ENCODE measurements at regions of chr4 and their contacts with region 1.

Region 1: GRCh38 chr4:56496241-56496640 is 9.3 kb upstream of the ARL9 start:
- DNase-seq: no peak
- H3K4me3 ChIP-seq: no peak overlapping the region
- H3K27ac ChIP-seq: no peak overlapping the region
- H3K4me1 ChIP-seq: no peaks in the 10 kb centered on the region
- H3K27me3 ChIP-seq: no peaks in the 10 kb centered on the region
- CTCF ChIP-seq: no peak
- POLR2A ChIP-seq: no peak

Region 2: DNA sequence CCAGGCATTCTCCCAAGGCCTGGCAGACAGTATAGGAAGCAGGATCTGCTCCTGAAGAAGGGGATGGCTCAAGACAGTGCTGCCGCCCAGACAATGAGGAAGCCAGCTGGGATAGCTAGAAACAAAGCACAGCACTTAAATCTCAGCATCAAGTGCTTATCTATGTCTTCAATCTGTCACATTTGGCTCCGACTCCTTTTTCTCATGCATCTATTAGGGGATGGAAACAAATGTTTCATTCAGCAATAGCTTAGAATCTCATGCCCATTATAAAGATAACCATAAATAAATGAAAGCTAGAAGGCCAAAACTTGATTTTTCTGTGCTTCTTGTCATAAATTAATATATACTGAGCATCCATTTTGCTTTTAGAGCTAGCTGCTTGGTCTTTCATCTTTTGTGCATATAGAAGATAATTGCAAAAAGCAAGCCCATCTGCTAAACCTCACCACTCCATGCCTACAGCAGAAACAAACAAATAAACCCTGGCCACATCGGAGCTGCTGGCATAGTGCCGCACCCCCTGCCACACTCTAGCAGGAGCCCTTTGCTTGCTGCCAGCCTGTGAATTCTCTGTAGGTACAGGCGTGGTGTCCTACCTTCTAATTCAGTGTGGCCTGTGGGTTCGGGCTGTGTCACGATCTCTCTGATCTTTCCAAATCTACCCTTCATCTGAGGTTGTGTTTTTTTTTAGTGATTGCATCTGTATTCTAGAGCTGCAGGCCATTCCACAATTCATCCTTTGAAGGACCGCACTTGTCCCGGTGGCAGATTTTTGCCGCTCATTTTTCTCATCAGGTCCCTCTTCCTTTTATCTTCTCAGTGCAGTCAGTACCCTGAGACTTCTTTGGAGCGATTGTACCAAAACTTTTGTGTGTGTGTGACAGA is 184.7 kb before region 1 on chr4:
- intact Hi-C with region 1: no loop called
- DNase-seq: no peak
- H3K4me3 ChIP-seq: no peak overlapping the region
- H3K27ac ChIP-seq: no peak overlapping the region
- H3K4me1 ChIP-seq: no peaks in the 10 kb centered on the region
- H3K27me3 ChIP-seq: no peaks in the 10 kb centered on the region
- CTCF ChIP-seq: no peak
- POLR2A ChIP-seq: no peak

Region 3: DNA sequence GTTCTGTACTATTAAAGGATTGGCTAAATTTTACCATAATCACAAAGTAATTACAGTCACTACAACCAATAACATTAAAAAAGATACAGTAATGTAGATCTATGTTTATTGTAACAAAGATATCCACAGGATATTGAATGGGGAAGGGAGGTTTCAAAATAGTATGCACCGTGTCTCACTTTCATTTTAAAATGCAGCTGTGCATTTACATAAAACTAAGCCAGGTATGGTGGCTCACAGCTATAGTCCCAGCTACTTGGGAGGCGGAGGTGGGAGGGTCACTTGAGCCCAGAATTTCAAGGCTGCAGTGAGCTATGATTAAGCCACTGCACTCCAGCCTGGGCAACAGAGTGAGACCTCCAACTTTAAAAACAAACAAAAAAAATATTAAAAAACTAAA is 20.3 kb before region 1 on chr4:
- intact Hi-C with region 1: loop called (anchors 2 kb)
- DNase-seq: no peak
- H3K4me3 ChIP-seq: no peak overlapping the region
- H3K27ac ChIP-seq: no peak overlapping the region
- H3K4me1 ChIP-seq: no peaks in the 10 kb centered on the region
- H3K27me3 ChIP-seq: no peaks in the 10 kb centered on the region
- CTCF ChIP-seq: no peak
- POLR2A ChIP-seq: no peak

Measured in prostate gland (tissue), 2 donors.